ENCODE measurements at regions of chr5 and their contacts with region 1.

Region 1: GRCh38 chr5:13510616-13511015 is 433.9 kb downstream of the DNAH5 start:
- DNase-seq: peak; percentile 76 to 82
- H3K4me3 ChIP-seq: no peak overlapping the region
- H3K4me3 Mint-ChIP-seq: no peak overlapping the region
- H3K27ac Mint-ChIP-seq: peak overlapping the region; percentile 72
- H3K4me1 ChIP-seq: peaks cover 26% of the 10 kb centered on the region
- H3K4me1 Mint-ChIP-seq: peaks cover 26% of the 10 kb centered on the region
- H3K27me3 ChIP-seq: no peaks in the 10 kb centered on the region
- H3K27me3 Mint-ChIP-seq: no peaks in the 10 kb centered on the region
- CTCF ChIP-seq: no peak

Region 2: GRCh38 chr5:13378083-13378482 is 132.5 kb before region 1 on chr5:
- CTCF ChIA-PET with region 1: no interaction called
- POLR2A ChIA-PET with region 1: no interaction called
- intact Hi-C with region 1: no loop called
- DNase-seq: no peak
- H3K4me3 ChIP-seq: no peak overlapping the region
- H3K4me3 Mint-ChIP-seq: no peak overlapping the region
- H3K27ac Mint-ChIP-seq: no peak overlapping the region
- H3K4me1 ChIP-seq: no peaks in the 10 kb centered on the region
- H3K4me1 Mint-ChIP-seq: no peaks in the 10 kb centered on the region
- H3K27me3 ChIP-seq: no peaks in the 10 kb centered on the region; the same call in 1 of the 2 replicates
- H3K27me3 Mint-ChIP-seq: no peaks in the 10 kb centered on the region
- CTCF ChIP-seq: no peak

Region 3: DNA sequence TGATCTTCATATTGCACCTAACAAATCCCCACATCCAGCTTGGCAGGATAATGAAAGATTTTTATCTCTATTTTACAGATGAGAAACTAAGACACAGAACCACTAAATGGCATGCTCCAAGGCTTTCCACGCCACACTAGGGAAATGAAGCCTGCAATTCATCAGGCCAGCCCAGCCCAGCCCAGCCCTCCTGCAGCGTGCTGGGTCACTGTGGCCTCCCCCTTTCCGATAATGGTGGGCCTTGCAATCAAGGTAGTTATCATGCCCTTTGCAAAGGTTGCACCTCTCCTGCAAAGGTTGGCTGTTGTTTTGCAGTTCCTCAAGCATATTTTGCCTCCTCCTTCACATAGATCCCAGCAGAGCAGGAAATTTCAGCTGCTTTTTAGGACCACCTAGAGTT is 11.3 kb after region 1 on chr5:
- CTCF ChIA-PET with region 1: no interaction called
- POLR2A ChIA-PET with region 1: no interaction called
- intact Hi-C with region 1: loop called (anchors 1 kb)
- DNase-seq: no peak
- H3K4me3 ChIP-seq: no peak overlapping the region
- H3K4me3 Mint-ChIP-seq: no peak overlapping the region
- H3K27ac Mint-ChIP-seq: no peak overlapping the region
- H3K4me1 ChIP-seq: peaks cover 15% of the 10 kb centered on the region
- H3K4me1 Mint-ChIP-seq: peaks cover 8% of the 10 kb centered on the region
- H3K27me3 ChIP-seq: no peaks in the 10 kb centered on the region
- H3K27me3 Mint-ChIP-seq: no peaks in the 10 kb centered on the region
- CTCF ChIP-seq: no peak

Region 4: DNA sequence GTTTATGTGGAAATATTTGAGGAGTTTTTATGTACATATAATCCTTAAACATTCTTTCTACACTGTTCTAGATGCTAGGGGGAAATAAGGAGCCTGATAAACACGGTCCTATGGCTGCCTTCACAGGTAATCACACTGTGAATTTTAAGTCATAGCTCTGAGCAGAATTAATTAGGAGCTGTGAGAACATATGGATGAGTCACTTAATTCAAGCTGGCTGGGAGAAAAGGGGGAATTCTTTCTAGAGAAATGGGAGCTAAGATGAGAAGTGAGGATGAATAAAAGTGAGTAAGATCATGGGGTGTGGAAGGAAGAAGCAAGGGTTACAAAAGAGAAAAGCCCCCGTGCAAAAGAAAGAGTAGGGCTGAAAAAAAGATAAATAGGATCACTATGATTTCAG is 143.1 kb after region 1 on chr5:
- CTCF ChIA-PET with region 1: no interaction called
- POLR2A ChIA-PET with region 1: no interaction called
- intact Hi-C with region 1: loop called (anchors 1 kb)
- DNase-seq: no peak
- H3K4me3 ChIP-seq: no peak overlapping the region
- H3K4me3 Mint-ChIP-seq: peak overlapping the region; percentile 2
- H3K27ac Mint-ChIP-seq: peak overlapping the region; percentile 13
- H3K4me1 ChIP-seq: peaks cover 19% of the 10 kb centered on the region
- H3K4me1 Mint-ChIP-seq: peaks cover 17% of the 10 kb centered on the region
- H3K27me3 ChIP-seq: no peaks in the 10 kb centered on the region
- H3K27me3 Mint-ChIP-seq: no peaks in the 10 kb centered on the region
- CTCF ChIP-seq: no peak